Activated CD4-positive, alpha-beta memory T cell treated with anti-CD3 and anti-CD28 coated beads for 36 hours (primary cell): ENCODE measurements at regions of chr1 and their contacts with region 1.

Region 1: DNA sequence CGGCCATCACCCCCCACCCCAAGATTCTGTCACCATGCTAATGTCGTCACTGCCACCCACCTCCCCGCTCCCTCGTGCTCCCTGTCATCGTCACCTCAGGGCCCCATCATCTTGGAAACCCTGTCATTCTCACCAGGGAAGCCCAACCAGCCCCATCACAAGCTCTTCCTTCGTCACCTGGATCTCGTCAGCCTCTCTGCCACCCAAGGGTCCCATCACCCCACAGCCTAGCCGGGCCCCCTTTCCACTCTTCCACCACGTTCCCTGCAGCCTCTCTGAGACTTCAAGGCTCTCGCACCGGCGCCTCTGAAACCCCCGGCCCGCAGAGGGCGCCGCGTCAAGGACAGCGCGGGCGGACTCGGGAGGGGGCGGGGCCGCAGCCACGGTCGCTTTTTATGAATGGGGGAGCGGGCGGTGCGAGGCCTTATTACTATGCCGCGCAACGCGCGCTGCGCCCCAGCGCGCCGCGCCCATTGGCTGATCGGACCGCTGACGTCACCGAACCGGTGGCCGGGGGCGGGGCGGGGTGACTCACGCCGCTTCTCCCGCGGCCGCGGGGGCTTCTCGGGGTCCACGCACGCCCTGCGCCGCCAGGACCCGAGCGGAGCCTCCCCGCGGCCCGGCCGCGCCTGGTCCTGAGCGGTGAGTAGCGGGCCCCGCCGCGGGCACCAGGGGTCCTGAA is at the start of gene GPR3:
- DNase-seq: peak; percentile 96
- H3K4me3 Mint-ChIP-seq: peak within 1 kb of the TSS; percentile 78
- H3K27ac Mint-ChIP-seq: peak within 1 kb of the TSS; percentile 63
- H3K4me1 Mint-ChIP-seq: peaks cover 13% of the 10 kb centered on the region
- H3K27me3 Mint-ChIP-seq: no peaks in the 10 kb centered on the region
- total RNA-seq, gene GPR3: 1.3 to 1.5 TPM

Region 2: DNA sequence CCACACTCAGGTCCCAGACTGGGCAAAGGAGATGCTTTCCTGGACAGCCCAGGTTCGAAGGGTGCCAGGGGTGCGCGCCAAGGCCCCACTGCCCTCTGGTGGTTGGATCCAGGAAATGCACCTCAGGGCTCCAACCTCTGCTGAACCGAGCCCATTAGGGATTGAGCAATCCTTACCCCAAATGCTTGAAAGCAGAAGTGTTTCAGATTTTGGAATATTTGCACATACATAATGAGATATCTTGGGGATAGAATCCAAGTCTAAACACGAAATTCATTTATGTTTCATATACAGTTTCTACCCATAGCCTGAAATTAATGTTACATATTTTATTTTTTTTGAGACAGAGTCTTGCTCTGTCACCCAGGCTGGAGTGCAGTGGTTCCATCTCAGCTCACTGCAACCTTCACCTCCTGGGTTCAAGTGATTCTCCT is 294.7 kb before region 1 on chr1:
- CTCF ChIA-PET with region 1: interaction called, 4 read pairs
- POLR2A ChIA-PET with region 1: no interaction called
- intact Hi-C with region 1: loop called (anchors 10 kb)
- DNase-seq: peak; percentile 85
- H3K4me3 Mint-ChIP-seq: no peak overlapping the region
- H3K27ac Mint-ChIP-seq: no peak overlapping the region
- H3K4me1 Mint-ChIP-seq: peaks cover 7% of the 10 kb centered on the region
- H3K27me3 Mint-ChIP-seq: no peaks in the 10 kb centered on the region

Region 3: GRCh38 chr1:27234049-27234882 is 158.0 kb before region 1 on chr1 and contains the start of gene WDTC1:
- CTCF ChIA-PET with region 1: no interaction called
- POLR2A ChIA-PET with region 1: no interaction called
- intact Hi-C with region 1: no loop called
- DNase-seq: peak; percentile 99
- H3K4me3 Mint-ChIP-seq: peak within 1 kb of the TSS; percentile 91
- H3K27ac Mint-ChIP-seq: peak within 1 kb of the TSS; percentile 86
- H3K4me1 Mint-ChIP-seq: peaks cover 29% of the 10 kb centered on the region
- H3K27me3 Mint-ChIP-seq: no peaks in the 10 kb centered on the region
- total RNA-seq, gene WDTC1: 30.3 TPM